ENCODE measurements at regions of chr18 and their contacts with region 1.

Region 1: DNA sequence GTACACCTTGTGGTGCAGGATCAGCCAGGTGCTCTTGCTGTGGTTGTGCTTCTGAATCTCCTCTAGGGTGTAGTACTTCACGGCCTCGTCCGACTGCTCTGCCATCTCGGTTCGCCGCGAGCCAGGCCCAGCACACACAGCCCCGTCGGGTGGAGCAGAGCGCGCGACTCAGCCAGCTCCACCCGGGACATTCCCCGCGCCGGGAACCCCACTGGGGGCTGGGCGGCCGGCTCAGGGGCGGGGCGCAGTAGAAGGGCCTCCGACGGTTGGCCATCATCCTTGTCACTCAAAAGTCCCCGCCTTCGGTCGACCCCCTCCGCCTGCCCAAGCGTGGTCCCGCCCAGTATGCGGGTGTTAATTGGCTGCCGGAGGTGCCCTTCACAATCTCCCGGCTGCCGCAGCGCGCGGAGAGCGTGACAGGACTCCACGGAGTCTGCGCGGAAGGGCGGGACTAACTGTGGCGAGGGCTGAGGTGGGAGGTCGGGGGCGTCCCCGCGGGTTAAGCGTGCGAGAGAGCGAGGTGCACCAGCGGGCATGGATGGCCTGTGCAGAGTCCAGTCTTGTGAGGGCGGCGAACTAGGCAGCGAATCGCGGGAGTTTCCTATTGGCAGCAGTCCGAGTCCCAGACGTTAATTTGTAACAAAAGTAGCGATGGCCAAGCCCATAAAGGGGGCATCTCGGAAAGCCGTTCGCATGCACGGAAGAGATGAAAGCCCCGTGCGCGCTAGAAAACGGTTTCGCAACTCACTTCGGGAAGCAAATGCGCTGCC is at the start of gene CYB5A:
- DNase-seq: peak; percentile 95 to 98 (median 95)
- H3K4me3 ChIP-seq: peak within 1 kb of the TSS; percentile 71 to 94 (median 89)
- H3K4me3 Mint-ChIP-seq: peak within 1 kb of the TSS; percentile 95 to 100
- H3K27ac ChIP-seq: peak within 1 kb of the TSS; percentile 17 to 79
- H3K27ac Mint-ChIP-seq: peak within 1 kb of the TSS; percentile 36 to 97 (median 91)
- H3K4me1 ChIP-seq: peaks cover 14 to 29% of the 10 kb centered on the region in 2 donors
- H3K4me1 Mint-ChIP-seq: peaks cover 28% of the 10 kb centered on the region
- H3K27me3 ChIP-seq: no peaks in the 10 kb centered on the region
- H3K27me3 Mint-ChIP-seq: peaks cover 0 to 4% (median 3%) of the 10 kb centered on the region in 3 donors
- CTCF ChIP-seq: no peak
- polyA plus RNA-seq, gene CYB5A: 19.0 to 27.6 (median 22.4) TPM

Region 2: GRCh38 chr18:74147779-74148542 is 144.0 kb before region 1 on chr18 and contains the starts of genes FBXO15 and TIMM21:
- intact Hi-C with region 1: loop called in 1 of 2 experiments (anchors 5 kb)
- DNase-seq: peak; percentile 91 to 94 (median 93)
- H3K4me3 ChIP-seq: peak within 1 kb of the TSS; percentile 86 to 94 (median 89)
- H3K4me3 Mint-ChIP-seq: peak within 1 kb of the TSS; percentile 96 to 97
- H3K27ac ChIP-seq: peak within 1 kb of the TSS; percentile 90 to 94
- H3K27ac Mint-ChIP-seq: peak within 1 kb of the TSS; percentile 95 to 99 (median 98)
- H3K4me1 ChIP-seq: peaks cover 10 to 23% of the 10 kb centered on the region in 2 donors
- H3K4me1 Mint-ChIP-seq: peaks cover 19% of the 10 kb centered on the region
- H3K27me3 ChIP-seq: no peaks in the 10 kb centered on the region
- H3K27me3 Mint-ChIP-seq: peaks cover 1 to 5% (median 4%) of the 10 kb centered on the region in 3 donors
- CTCF ChIP-seq: no peak
- polyA plus RNA-seq, gene FBXO15: not detected
- polyA plus RNA-seq, gene TIMM21: 11.0 to 15.6 (median 14.7) TPM

Region 3: GRCh38 chr18:74251297-74252038 is 40.5 kb before region 1 on chr18:
- intact Hi-C with region 1: loop called in 1 of 2 experiments (anchors 5 kb)
- DNase-seq: peak; percentile 72 to 87 (median 80)
- H3K4me3 ChIP-seq: peak overlapping the region in 1 of 3 experiments; percentile 34
- H3K4me3 Mint-ChIP-seq: peak overlapping the region in 1 of 2 donors; percentile 60
- H3K27ac ChIP-seq: peak overlapping the region; percentile 34 to 79
- H3K27ac Mint-ChIP-seq: peak overlapping the region; percentile 82 to 96 (median 94)
- H3K4me1 ChIP-seq: peaks cover 42 to 48% of the 10 kb centered on the region in 2 donors
- H3K4me1 Mint-ChIP-seq: peaks cover 49% of the 10 kb centered on the region
- H3K27me3 ChIP-seq: no peaks in the 10 kb centered on the region
- H3K27me3 Mint-ChIP-seq: peaks cover 0 to 2% (median 2%) of the 10 kb centered on the region in 3 donors
- CTCF ChIP-seq: no peak